ENCODE measurements at regions of chr19 and their contacts with region 1.

Region 1: DNA sequence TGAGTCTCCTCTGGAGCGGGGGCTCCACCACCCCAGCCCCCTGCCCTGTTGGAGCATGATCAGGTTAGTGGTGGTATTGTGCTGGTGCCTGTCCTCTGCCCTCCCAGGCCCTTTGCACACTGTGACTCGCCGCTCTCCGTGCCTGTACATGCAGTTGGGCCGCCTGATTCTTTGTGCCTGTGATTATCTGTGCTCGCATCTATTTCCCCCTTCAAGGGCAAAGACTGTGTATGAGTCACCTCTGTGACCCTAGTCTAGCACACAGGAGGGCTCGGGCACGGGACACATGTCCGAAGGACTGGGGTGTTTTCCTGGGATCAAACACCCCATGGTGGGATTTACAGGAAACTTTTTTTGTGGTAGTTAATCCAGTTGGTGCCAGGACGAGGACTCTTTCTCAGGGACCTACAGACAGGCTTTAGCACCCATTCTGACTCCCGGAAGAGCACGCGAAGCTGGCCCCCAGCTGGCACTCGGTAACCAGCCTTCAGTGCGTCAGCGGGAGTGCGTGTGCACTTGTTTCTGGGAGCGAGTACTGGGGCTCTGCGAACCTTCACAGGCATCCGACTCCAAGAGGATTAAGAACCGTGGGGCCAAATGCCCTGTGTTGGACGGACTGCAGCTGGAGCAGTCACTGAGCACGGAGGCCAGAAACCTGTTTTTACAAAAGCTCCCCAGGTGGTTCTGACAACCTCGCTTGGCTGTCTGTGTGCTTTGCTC is 6.6 kb downstream of the PPP1R37 start:
- DNase-seq: peak; percentile 43
- H3K4me3 Mint-ChIP-seq: peak overlapping the region; percentile 54
- H3K27ac Mint-ChIP-seq: peak overlapping the region; percentile 96
- H3K4me1 Mint-ChIP-seq: peaks cover 82% of the 10 kb centered on the region
- H3K27me3 Mint-ChIP-seq: no peaks in the 10 kb centered on the region
- CTCF ChIP-seq: no peak

Region 2: GRCh38 chr19:45130888-45131615 is 31.4 kb after region 1 on chr19:
- CTCF ChIA-PET with region 1: interaction called, 4 read pairs
- intact Hi-C with region 1: loop called (anchors 2 kb)
- DNase-seq: peak; percentile 83
- H3K4me3 Mint-ChIP-seq: no peak overlapping the region
- H3K27ac Mint-ChIP-seq: peak overlapping the region; percentile 28
- H3K4me1 Mint-ChIP-seq: peaks cover 22% of the 10 kb centered on the region
- H3K27me3 Mint-ChIP-seq: no peaks in the 10 kb centered on the region
- CTCF ChIP-seq: peak; percentile 70